ENCODE measurements at regions of chr1 and their contacts with region 1.

Region 1: DNA sequence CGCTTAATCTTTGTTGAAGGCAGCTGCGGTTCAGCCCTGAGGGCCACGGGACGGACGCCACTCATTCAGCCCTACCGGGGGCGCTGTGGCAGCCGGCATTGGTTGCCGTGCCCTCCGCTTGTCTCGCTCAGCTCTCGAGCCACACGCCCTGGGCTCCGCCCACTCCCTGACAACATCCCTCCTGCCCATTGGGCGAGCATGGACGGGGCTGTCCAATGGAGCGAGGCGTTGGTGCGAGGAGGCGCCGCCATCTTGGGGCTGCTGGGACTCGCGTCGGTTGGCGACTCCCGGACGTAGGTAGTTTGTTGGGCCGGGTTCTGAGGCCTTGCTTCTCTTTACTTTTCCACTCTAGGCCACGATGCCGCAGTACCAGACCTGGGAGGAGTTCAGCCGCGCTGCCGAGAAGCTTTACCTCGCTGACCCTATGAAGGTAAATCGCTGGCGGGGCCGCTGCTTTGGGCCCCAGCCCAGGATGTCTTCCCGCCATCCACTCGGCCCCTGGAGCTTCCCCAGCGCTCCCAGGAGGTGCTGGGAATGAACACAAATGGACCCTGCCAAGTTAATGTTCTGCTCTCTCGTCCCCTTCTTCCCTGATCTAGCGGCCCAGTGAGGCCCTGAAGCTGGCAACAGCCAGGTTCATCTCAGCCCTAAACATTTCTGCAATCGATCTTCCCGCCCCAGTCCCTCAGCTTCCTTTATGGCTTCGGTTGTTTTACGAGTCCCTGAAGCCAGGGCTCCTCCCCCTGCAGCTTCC is at the start of gene SRP9:
- DNase-seq: peak; percentile 97
- ATAC-seq: peak; percentile 99
- H3K4me3 ChIP-seq: peak within 1 kb of the TSS; percentile 87
- H3K27ac ChIP-seq: peak within 1 kb of the TSS; percentile 96
- H3K4me1 ChIP-seq: no peaks in the 10 kb centered on the region
- H3K27me3 ChIP-seq: no peaks in the 10 kb centered on the region
- CTCF ChIP-seq: peak; percentile 92 to 98 (median 93)
- EP300 ChIP-seq: no peak; a peak in 1 of 4 replicates
- POLR2A ChIP-seq: peak; percentile 92
- RAD21 ChIP-seq: peak; percentile 49
- polyA plus RNA-seq, gene SRP9: 912 to 1,200 TPM

Region 2: DNA sequence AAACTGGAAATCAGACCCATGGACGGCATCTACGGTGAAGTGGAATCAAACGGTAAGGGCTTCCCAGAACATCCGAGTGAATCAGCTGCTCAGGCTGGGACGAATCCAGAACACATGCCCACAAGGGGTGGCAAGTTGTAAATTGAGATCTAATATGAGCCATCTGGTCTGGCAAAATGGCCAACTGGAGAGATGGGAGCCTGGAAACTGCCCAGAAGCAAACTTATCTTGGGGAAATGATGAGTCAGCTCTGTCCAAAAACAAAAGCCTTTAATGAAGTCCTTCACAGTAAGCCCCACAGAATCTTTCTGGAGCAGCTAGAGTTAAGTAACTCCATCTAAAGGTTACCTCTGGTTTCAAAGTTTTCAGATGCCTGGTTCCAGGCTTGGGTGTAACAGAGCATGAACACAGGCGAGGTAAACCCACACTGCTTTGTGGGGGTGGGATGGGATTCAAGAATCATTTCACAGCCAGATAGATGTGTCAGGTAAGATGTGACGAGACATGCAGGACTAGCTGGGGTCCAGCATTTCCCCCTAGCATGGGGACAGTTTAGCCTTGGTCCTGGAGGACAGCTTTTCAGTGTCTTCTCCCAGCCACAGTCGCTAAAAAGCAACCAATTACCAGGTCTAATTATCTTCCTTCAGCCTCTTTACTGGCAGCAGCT is 10.7 kb before region 1 on chr1:
- CTCF ChIA-PET with region 1: interaction called, 57 read pairs
- POLR2A ChIA-PET with region 1: interaction called, 5 read pairs
- RAD21 ChIA-PET with region 1: interaction called, 9 read pairs
- SMC1A ChIA-PET with region 1: interaction called, 5 read pairs
- in situ Hi-C with region 1: no loop called
- intact Hi-C with region 1: no loop called
- DNase-seq: no peak
- ATAC-seq: no peak
- H3K4me3 ChIP-seq: no peak overlapping the region
- H3K27ac ChIP-seq: no peak overlapping the region
- H3K4me1 ChIP-seq: peaks cover 9% of the 10 kb centered on the region
- H3K27me3 ChIP-seq: no peaks in the 10 kb centered on the region
- CTCF ChIP-seq: no peak
- EP300 ChIP-seq: no peak
- POLR2A ChIP-seq: no peak
- RAD21 ChIP-seq: no peak

Region 3: GRCh38 chr1:225881969-225882693 is 104.4 kb after region 1 on chr1 and contains the start of gene TMEM63A:
- CTCF ChIA-PET with region 1: interaction called, 32 read pairs
- POLR2A ChIA-PET with region 1: interaction called, 30 read pairs
- RAD21 ChIA-PET with region 1: interaction called, 37 read pairs
- SMC1A ChIA-PET with region 1: interaction called, 29 read pairs
- in situ Hi-C with region 1: no loop called
- intact Hi-C with region 1: no loop called
- DNase-seq: peak; percentile 40
- ATAC-seq: peak; percentile 88
- H3K4me3 ChIP-seq: peak within 1 kb of the TSS; percentile 88
- H3K27ac ChIP-seq: peak within 1 kb of the TSS; percentile 77
- H3K4me1 ChIP-seq: peaks cover 30% of the 10 kb centered on the region
- H3K27me3 ChIP-seq: no peaks in the 10 kb centered on the region
- CTCF ChIP-seq: peak; percentile 31 to 42 (median 40); a peak in 5 of 6 replicates
- EP300 ChIP-seq: no peak
- POLR2A ChIP-seq: peak; percentile 81
- RAD21 ChIP-seq: no peak
- polyA plus RNA-seq, gene TMEM63A: 1.3 to 1.8 TPM

Region 4: DNA sequence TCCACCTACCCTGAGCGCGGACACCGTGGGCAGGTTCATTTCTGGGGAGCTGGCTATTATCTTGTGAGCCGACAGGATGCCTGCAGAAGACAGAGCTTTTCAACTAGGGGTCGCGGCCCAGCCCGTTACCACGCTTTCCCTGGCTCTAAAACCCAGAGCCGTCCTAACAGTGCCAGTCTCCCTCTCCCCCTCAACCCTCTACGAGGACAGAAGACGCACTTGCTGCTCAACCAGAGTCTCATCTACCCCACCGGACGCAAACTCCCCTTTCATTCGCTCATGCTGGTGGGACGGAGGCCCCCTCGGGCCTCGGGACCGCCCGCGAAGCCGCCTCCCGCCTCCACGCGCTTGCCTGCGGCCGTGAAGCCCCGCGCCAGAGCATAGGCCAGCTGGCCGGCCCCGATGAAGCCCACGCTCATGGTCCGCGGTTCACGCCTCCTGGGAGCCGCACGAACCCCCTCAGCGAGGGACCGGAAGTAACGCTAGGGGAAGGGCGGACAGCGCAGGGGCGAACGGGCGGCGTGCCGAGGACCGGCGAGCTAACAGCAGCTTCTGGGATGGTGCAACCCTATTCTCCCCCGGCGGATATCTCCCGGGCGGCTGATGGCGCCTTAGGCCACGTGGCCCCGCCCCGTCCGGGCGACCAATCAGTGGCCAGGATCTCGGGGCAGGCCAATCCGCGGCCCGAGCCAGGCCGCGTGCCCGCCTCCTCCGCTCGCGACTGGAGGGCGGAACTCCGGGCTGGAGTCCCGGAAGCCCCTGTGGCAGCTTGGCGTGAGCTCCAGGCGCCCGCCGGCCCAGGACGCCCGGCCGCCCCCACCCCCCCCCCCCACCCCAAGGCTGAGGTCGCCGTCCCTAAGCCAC is 146.2 kb after region 1 on chr1 and contains the start of gene PYCR2:
- CTCF ChIA-PET with region 1: interaction called, 12 read pairs
- POLR2A ChIA-PET with region 1: interaction called, 5 read pairs
- RAD21 ChIA-PET with region 1: interaction called, 5 read pairs
- SMC1A ChIA-PET with region 1: interaction called, 6 read pairs
- in situ Hi-C with region 1: no loop called
- intact Hi-C with region 1: loop called (anchors 5 kb)
- DNase-seq: peak; percentile 79
- ATAC-seq: peak; percentile 98
- H3K4me3 ChIP-seq: peak within 1 kb of the TSS; percentile 94
- H3K27ac ChIP-seq: peak within 1 kb of the TSS; percentile 96
- H3K4me1 ChIP-seq: peaks cover 7% of the 10 kb centered on the region
- H3K27me3 ChIP-seq: no peaks in the 10 kb centered on the region
- CTCF ChIP-seq: no peak
- EP300 ChIP-seq: no peak
- POLR2A ChIP-seq: peak; percentile 96
- RAD21 ChIP-seq: no peak
- polyA plus RNA-seq, gene PYCR2: 1.7 to 5.9 TPM

Region 5: GRCh38 chr1:226109829-226110248 is 332.1 kb after region 1 on chr1:
- CTCF ChIA-PET with region 1: no interaction called
- POLR2A ChIA-PET with region 1: no interaction called
- RAD21 ChIA-PET with region 1: no interaction called
- SMC1A ChIA-PET with region 1: no interaction called
- in situ Hi-C with region 1: no loop called
- intact Hi-C with region 1: loop called (anchors 10 kb)
- DNase-seq: no peak
- ATAC-seq: peak; percentile 71
- H3K4me3 ChIP-seq: peak overlapping the region; percentile 77
- H3K27ac ChIP-seq: peak overlapping the region; percentile 92
- H3K4me1 ChIP-seq: peaks cover 23% of the 10 kb centered on the region
- H3K27me3 ChIP-seq: no peaks in the 10 kb centered on the region
- CTCF ChIP-seq: peak in 2 of 3 experiments; percentile 12 to 20; a peak in 1 of 6 replicates
- EP300 ChIP-seq: no peak
- POLR2A ChIP-seq: 0 out of 2 replicates have a peak, but pooled peaks have one; percentile 13
- RAD21 ChIP-seq: peak; percentile 25; the same call in 1 of the 2 replicates

Measured in GM12878 (cell line).